T-cell (primary cell): ENCODE measurements at regions of chr3 and their contacts with region 1.

Region 1: GRCh38 chr3:150798122-150798626 is 35.2 kb upstream of the SIAH2 start:
- DNase-seq: no peak
- ATAC-seq: no peak
- H3K4me3 ChIP-seq: no peak overlapping the region
- H3K4me3 Mint-ChIP-seq: no peak overlapping the region
- H3K27ac ChIP-seq: no peak overlapping the region
- H3K27ac Mint-ChIP-seq: no peak overlapping the region
- H3K4me1 ChIP-seq: peaks cover 2 to 3% of the 10 kb centered on the region in 2 experiments
- H3K4me1 Mint-ChIP-seq: peaks cover 0 to 4% (median 3%) of the 10 kb centered on the region in 3 donors
- H3K27me3 ChIP-seq: peaks cover 0 to 4% of the 10 kb centered on the region in 2 experiments
- H3K27me3 Mint-ChIP-seq: peaks cover 10 to 11% of the 10 kb centered on the region in 2 donors

Region 2: DNA sequence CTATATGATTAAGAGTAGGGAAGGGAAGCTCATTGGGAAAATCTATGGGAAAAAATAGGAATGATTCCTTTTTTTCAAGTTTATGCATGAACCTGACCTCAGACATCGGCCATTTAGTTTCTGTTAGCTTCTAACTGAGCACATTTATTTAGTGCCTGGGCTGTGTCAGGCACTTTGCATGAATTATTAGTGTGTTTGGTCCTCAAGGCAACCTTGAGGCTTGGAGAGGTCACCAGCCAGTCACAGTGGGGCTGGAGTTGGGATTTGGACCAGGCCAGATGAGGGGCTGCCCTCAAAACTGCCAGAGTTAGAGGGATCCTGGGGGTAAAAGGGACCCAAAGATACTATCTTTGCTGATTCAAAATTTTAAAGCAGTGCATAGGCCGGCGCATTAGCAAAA is 43.3 kb before region 1 on chr3:
- CTCF ChIA-PET with region 1: no interaction called
- POLR2A ChIA-PET with region 1: interaction called in 1 of 2 experiments, 10 read pairs
- DNase-seq: no peak
- ATAC-seq: no peak
- H3K4me3 ChIP-seq: no peak overlapping the region
- H3K4me3 Mint-ChIP-seq: no peak overlapping the region
- H3K27ac ChIP-seq: no peak overlapping the region
- H3K27ac Mint-ChIP-seq: no peak overlapping the region
- H3K4me1 ChIP-seq: peaks cover 2 to 48% of the 10 kb centered on the region in 2 experiments
- H3K4me1 Mint-ChIP-seq: peaks cover 69 to 89% (median 83%) of the 10 kb centered on the region in 3 donors
- H3K27me3 ChIP-seq: no peaks in the 10 kb centered on the region
- H3K27me3 Mint-ChIP-seq: no peaks in the 10 kb centered on the region